Right ventricle myocardium inferior (tissue), 1 donor: ENCODE measurements at regions of chr16 and their contacts with region 1.

Region 1: GRCh38 chr16:66872943-66873684 is 7.2 kb upstream of the PDP2 start:
- DNase-seq: peak; percentile 96
- ATAC-seq: peak; percentile 97

Region 2: GRCh38 chr16:66406534-66407221 is 466.4 kb before region 1 on chr16:
- intact Hi-C with region 1: loop called (anchors 5 kb)
- DNase-seq: peak; percentile 93
- ATAC-seq: peak; percentile 82

Region 3: GRCh38 chr16:66650707-66651473 is 222.2 kb before region 1 on chr16:
- intact Hi-C with region 1: loop called (anchors 5 kb)
- DNase-seq: no peak
- ATAC-seq: peak; percentile 91

Region 4: DNA sequence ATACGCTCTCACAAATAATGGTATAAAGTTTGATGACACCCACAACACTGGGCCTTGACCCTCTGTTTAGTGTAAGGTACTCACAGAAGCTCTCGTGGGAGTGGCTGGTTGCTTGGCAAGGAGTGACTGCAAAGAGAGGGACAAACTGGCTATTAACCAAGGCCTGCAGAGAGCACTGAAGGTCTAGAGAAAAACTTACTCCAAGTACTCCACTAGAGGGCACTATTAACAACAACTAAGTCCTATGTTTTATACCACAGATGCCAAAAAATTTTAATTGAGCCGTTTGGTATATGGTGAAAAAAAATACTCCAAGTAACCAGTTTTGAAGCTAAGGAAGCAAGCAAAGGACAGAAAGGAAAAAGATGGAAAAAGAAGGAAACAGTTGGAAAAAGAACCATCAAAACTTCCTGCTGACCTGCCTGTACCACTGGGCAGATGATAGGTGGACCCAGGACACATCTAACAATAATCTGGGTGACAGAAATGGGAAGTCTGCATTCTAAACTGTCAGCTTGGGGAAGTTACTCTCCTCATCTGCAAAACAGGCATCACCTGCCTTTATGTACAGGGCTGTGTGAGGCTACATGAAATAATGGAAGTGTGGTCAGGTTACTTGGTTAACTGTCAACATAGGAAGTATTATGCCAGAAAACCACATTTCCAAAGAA is 144.9 kb before region 1 on chr16:
- intact Hi-C with region 1: loop called (anchors 2 kb)
- DNase-seq: no peak
- ATAC-seq: peak; percentile 77

Region 5: DNA sequence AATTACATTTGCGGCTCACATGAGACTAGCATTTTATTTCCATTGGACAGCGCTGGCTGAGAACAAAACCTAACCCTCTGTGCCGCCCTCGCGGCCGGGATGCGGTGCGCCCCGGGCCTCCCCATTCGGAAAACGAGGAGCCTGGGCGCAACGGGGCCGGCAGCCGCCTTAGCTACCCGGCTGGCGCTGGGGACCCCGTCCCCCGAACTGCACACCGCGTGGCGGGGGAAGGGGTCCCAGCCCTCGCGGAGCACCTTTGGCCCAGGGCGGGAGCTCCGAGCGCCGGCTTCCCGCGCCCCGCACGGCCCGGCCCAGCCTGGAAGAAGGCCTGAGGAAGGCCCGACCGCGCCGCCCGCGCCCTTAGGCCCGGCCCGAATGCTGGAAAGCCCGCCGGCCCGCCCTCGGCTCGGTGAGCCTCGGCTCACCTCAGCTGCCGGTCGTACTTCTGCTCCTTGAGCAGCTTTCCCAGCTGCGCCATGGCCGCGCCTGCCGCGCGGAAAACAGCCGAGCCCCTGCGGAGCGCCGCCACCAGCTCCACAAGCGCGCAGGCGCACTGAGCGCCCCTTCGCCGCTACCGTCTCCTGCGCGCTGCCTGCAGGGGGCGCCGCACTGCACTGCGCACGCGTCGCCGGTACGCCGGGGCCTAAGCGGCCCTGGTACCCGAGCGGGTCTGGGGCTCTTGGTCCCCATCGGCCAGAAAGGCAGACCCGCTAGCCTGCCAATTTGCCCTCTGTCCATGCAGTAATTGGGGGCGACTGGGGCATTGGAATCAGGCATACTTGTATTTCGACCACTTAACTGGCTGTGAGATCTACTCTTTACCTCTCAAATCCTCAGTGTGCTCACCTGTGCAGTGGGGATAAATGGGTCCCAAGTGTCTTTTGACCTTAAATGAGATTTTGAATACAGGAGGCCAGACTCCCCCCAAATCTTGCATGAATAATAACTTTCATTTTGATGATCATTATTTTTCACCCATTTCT is 42.4 kb before region 1 on chr16 and contains the start of gene NAE1:
- intact Hi-C with region 1: loop called (anchors 2 kb)
- DNase-seq: peak; percentile 94
- ATAC-seq: peak; percentile 98
- total RNA-seq, gene NAE1: 32.4 TPM

Region 6: GRCh38 chr16:66858740-66859396 is 14.2 kb before region 1 on chr16:
- intact Hi-C with region 1: no loop called
- DNase-seq: peak; percentile 78
- ATAC-seq: peak; percentile 76